ENCODE measurements at regions of chr5 and their contacts with region 1.

Region 1: GRCh38 chr5:151740336-151740942 is 18.0 kb downstream of the ATOX1 start:
- DNase-seq: peak; percentile 54
- ATAC-seq: peak; percentile 75
- H3K4me3 ChIP-seq: no peak overlapping the region
- H3K27ac ChIP-seq: peak overlapping the region; percentile 90
- H3K4me1 ChIP-seq: peaks cover 45% of the 10 kb centered on the region
- H3K27me3 ChIP-seq: no peaks in the 10 kb centered on the region
- CTCF ChIP-seq: peak; percentile 92

Region 2: DNA sequence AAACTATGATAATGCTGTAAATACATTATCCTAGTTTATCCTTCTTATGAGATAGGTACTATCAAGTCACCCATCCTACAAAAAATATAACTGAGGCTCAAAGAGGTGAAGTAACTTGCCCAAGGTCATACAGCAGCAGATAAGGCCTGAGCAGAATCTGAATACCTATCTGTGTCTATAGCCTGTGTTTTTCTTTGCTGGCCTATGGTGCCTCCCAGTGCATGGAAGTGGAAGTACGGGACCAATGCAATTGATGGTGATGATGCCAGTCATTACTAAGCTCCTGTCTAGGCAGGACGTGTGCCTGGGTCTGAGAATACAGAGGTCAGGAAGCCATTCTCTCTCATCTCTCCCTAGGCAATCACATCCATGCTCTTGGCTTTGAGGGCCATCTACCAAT is 217.1 kb before region 1 on chr5:
- CTCF ChIA-PET with region 1: interaction called, 4 read pairs
- POLR2A ChIA-PET with region 1: no interaction called
- in situ Hi-C with region 1: no loop called
- intact Hi-C with region 1: loop called (anchors 5 kb)
- DNase-seq: peak; percentile 41
- ATAC-seq: peak; percentile 92
- H3K4me3 ChIP-seq: no peak overlapping the region
- H3K27ac ChIP-seq: no peak overlapping the region
- H3K4me1 ChIP-seq: no peaks in the 10 kb centered on the region
- H3K27me3 ChIP-seq: 0 out of 2 replicates have a peak, but pooled peaks cover 6% of the 10 kb centered on the region
- CTCF ChIP-seq: peak; percentile 80

Region 3: GRCh38 chr5:151659001-151659754 is 81.3 kb before region 1 on chr5:
- CTCF ChIA-PET with region 1: interaction called, 39 read pairs
- POLR2A ChIA-PET with region 1: no interaction called
- in situ Hi-C with region 1: no loop called
- intact Hi-C with region 1: loop called (anchors 1 kb)
- DNase-seq: peak; percentile 47
- ATAC-seq: peak; percentile 95
- H3K4me3 ChIP-seq: no peak overlapping the region
- H3K27ac ChIP-seq: peak overlapping the region; percentile 83
- H3K4me1 ChIP-seq: peaks cover 21% of the 10 kb centered on the region
- H3K27me3 ChIP-seq: no peaks in the 10 kb centered on the region
- CTCF ChIP-seq: peak; percentile 94

Measured in Panc1 (cell line).